ENCODE measurements at regions of chr10 and their contacts with region 1.

Region 1: GRCh38 chr10:6401562-6402348 is 178.3 kb downstream of the PRKCQ start:
- DNase-seq: peak; percentile 71
- ATAC-seq: peak; percentile 83
- H3K4me3 Mint-ChIP-seq: peak overlapping the region; percentile 1
- H3K27ac Mint-ChIP-seq: no peak overlapping the region
- H3K4me1 Mint-ChIP-seq: peaks cover 37% of the 10 kb centered on the region
- H3K27me3 Mint-ChIP-seq: peaks cover 4% of the 10 kb centered on the region
- CTCF ChIP-seq: peak; percentile 67

Region 2: DNA sequence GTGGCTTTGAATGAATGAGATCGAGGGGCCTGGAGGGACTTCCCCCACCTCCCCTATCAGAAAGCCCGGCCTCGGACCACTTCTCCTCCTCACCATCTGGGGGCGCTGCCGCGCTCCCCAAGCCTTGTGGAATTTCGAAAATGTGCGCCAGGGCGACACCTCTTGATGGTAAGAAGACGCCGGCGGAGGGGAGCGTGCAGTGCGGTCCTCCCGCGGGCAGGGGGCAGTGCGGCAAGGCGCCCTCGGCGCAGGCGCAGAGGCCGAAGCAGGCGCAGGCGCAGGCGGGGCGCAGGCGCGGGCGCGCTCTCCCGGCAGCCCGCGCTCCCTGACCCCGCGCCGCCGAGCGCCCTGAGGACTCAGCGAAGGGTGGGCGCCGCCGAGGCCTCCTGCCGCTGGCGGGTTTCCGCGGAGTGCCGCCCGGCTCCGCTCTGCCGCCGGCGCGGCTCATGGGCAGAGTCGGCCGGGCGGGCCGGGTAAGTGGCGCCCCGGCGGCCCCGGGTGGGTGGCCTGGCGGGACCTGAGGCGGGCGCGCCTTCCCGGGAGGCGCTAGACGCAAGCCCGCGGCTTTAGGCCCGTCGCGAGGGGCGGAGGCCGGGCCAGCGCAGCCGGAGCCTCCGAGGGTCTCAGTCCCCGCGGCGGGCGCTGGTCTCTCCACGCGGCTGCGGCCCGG is 312.9 kb before region 1 on chr10 and contains the start of gene RBM17:
- CTCF ChIA-PET with region 1: interaction called, 11 read pairs
- POLR2A ChIA-PET with region 1: no interaction called
- intact Hi-C with region 1: no loop called
- DNase-seq: peak; percentile 98
- ATAC-seq: peak; percentile 79
- H3K4me3 Mint-ChIP-seq: peak within 1 kb of the TSS; percentile 84
- H3K27ac Mint-ChIP-seq: peak within 1 kb of the TSS; percentile 81
- H3K4me1 Mint-ChIP-seq: peaks cover 60% of the 10 kb centered on the region
- H3K27me3 Mint-ChIP-seq: no peaks in the 10 kb centered on the region
- CTCF ChIP-seq: peak; percentile 100
- total RNA-seq, gene RBM17: 284 to 285 TPM

Region 3: GRCh38 chr10:6151087-6151977 is 250.4 kb before region 1 on chr10:
- CTCF ChIA-PET with region 1: interaction called, 13 read pairs
- POLR2A ChIA-PET with region 1: no interaction called
- intact Hi-C with region 1: no loop called
- DNase-seq: peak; percentile 70
- ATAC-seq: peak; percentile 78
- H3K4me3 Mint-ChIP-seq: peak overlapping the region; percentile 15
- H3K27ac Mint-ChIP-seq: peak overlapping the region; percentile 63
- H3K4me1 Mint-ChIP-seq: peaks cover 51% of the 10 kb centered on the region
- H3K27me3 Mint-ChIP-seq: no peaks in the 10 kb centered on the region
- CTCF ChIP-seq: peak; percentile 64

Region 4: GRCh38 chr10:6208799-6209235 is 192.9 kb before region 1 on chr10:
- CTCF ChIA-PET with region 1: interaction called, 19 read pairs
- POLR2A ChIA-PET with region 1: interaction called, 5 read pairs
- intact Hi-C with region 1: loop called (anchors 2 kb)
- DNase-seq: no peak
- ATAC-seq: no peak
- H3K4me3 Mint-ChIP-seq: no peak overlapping the region
- H3K27ac Mint-ChIP-seq: no peak overlapping the region
- H3K4me1 Mint-ChIP-seq: peaks cover 26% of the 10 kb centered on the region
- H3K27me3 Mint-ChIP-seq: no peaks in the 10 kb centered on the region
- CTCF ChIP-seq: no peak

Region 5: DNA sequence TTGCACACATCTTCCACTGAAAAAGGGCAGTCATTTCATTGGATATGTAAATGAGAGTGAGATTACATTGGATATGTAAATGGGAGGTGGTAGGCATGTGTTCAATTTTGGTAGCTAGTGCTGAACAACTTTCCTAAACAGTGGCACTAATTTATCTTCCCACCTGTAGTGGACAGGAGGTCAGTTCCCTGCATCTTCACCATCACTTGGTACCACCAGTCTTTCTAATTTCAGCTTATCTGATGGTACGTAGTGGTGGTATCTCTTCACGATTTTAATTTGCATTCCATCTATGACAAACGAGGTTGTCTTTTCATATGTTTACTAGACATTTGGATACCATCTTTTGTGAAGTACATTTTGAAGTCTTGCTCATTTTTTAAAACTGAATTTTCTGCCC is 140.9 kb before region 1 on chr10:
- CTCF ChIA-PET with region 1: interaction called, 13 read pairs
- POLR2A ChIA-PET with region 1: no interaction called
- intact Hi-C with region 1: no loop called
- DNase-seq: no peak
- ATAC-seq: no peak
- H3K4me3 Mint-ChIP-seq: no peak overlapping the region
- H3K27ac Mint-ChIP-seq: no peak overlapping the region
- H3K4me1 Mint-ChIP-seq: no peaks in the 10 kb centered on the region
- H3K27me3 Mint-ChIP-seq: no peaks in the 10 kb centered on the region
- CTCF ChIP-seq: no peak

Region 6: DNA sequence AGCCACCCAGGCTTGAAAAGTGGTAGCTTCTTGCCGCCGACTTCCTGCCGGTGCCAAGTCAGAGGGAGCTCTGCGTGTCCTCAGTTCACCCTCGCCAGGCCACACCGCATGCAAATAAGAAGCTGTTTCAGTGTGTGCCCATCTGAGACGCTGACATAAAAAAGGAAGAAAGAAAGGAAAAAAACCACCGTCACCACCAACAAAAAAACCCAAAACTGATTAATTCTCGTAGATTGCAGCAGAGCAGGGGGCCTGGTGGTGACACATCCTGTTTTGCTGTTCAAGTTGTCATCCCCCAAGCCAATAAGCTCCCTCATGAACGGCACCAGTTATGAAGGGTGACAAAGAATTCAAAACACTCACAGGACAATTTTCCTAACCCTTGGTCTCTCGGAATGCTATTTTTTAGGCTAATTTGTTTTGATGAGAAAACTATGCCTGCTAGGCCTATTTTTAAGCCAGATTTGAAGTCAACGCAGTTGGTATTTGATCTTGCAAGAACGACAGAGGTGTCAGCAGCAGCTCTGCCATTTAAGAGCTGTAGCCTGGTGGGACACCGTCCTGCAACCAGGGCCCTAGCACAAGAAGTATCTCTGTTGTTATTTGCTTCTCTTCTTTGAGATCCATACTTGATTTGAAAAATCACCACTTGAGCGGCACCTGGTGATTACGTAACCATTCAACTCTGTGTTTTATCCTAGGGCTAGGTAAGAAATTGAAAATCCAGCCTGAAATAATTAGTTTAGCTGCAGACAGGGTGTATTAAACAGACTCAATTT is 53.5 kb before region 1 on chr10:
- CTCF ChIA-PET with region 1: interaction called, 39 read pairs
- POLR2A ChIA-PET with region 1: interaction called, 18 read pairs
- intact Hi-C with region 1: no loop called
- DNase-seq: peak; percentile 93
- ATAC-seq: peak; percentile 90
- H3K4me3 Mint-ChIP-seq: peak overlapping the region; percentile 66
- H3K27ac Mint-ChIP-seq: peak overlapping the region; percentile 99
- H3K4me1 Mint-ChIP-seq: peaks cover 56% of the 10 kb centered on the region
- H3K27me3 Mint-ChIP-seq: no peaks in the 10 kb centered on the region
- CTCF ChIP-seq: no peak

Region 7: GRCh38 chr10:6416892-6417512 is 15.2 kb after region 1 on chr10:
- CTCF ChIA-PET with region 1: interaction called, 33 read pairs
- POLR2A ChIA-PET with region 1: no interaction called
- intact Hi-C with region 1: no loop called
- DNase-seq: no peak
- ATAC-seq: peak; percentile 82
- H3K4me3 Mint-ChIP-seq: no peak overlapping the region
- H3K27ac Mint-ChIP-seq: no peak overlapping the region
- H3K4me1 Mint-ChIP-seq: peaks cover 1% of the 10 kb centered on the region
- H3K27me3 Mint-ChIP-seq: no peaks in the 10 kb centered on the region
- CTCF ChIP-seq: peak; percentile 83

Region 8: DNA sequence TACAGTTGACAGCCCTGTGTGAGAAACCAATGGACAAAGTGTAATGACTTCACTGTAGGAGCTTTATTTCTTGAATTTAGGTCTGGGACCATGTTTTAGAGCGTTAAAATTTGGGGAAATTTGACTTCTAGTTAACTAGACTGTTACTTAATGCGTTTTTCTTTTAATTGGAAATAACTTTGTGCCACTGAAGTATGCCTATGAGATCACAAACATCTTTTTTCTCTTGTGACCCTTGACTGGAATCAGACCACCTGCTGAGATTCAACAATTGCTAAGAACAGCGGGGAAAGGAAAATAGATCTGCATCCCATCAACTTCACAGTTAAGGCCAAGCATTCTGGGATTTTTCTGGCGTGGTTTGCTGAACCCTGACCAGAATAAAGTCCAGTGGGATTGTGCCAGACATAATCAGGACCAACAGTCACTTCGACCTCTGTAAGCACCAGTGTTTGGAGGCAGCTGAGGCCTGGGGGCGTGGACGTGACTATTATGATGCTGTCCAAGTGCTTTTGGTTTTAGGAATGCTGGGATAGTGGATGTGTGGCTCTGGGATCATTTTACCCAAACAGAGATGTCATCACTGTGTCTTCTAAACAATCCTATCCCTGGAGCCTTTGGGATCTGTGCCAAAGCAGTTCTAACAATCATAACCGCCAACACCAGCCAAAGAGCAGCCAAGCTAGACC is 551.5 kb after region 1 on chr10:
- CTCF ChIA-PET with region 1: no interaction called
- POLR2A ChIA-PET with region 1: no interaction called
- intact Hi-C with region 1: no loop called
- DNase-seq: no peak
- ATAC-seq: no peak
- H3K4me3 Mint-ChIP-seq: no peak overlapping the region
- H3K27ac Mint-ChIP-seq: no peak overlapping the region
- H3K4me1 Mint-ChIP-seq: peaks cover 11% of the 10 kb centered on the region
- H3K27me3 Mint-ChIP-seq: no peaks in the 10 kb centered on the region
- CTCF ChIP-seq: no peak

Region 9: DNA sequence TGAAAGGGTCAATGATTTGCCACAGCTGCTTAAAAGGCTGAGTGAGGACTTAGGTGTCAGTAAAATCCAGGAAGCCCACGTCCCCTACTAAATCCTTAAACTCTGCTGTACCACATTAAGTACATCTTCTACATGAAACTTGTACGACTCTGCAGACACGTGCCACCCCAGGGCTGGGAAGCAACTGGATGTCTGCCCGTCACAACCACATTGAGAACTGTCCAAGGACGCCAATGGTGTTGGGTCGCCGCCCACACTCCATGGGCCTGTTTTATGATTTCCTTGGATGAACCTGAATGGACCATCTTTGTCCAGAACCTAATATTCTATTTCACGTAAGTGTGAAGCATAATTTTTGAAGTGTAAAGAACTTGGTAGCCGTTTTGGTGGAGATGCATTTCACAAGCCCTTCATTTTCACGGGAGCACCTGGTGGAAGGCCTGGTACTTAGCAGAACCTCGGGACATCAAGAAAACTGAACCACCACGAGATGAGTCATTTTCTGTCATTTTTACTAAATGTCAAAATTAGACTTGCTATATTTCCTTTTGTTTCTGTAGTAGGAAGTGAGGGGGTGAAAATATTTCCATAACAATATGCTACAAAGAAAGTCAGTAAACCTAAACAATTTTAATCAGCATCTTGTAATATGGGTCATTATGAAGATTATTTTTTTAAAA is 874.1 kb after region 1 on chr10:
- CTCF ChIA-PET with region 1: no interaction called
- POLR2A ChIA-PET with region 1: no interaction called
- intact Hi-C with region 1: no loop called
- DNase-seq: no peak
- ATAC-seq: peak; percentile 48
- H3K4me3 Mint-ChIP-seq: no peak overlapping the region
- H3K27ac Mint-ChIP-seq: peak overlapping the region; percentile 16
- H3K4me1 Mint-ChIP-seq: peaks cover 61% of the 10 kb centered on the region
- H3K27me3 Mint-ChIP-seq: no peaks in the 10 kb centered on the region
- CTCF ChIP-seq: no peak

Measured in activated CD8-positive, alpha-beta T cell treated with anti-CD3 and anti-CD28 coated beads for 36 hours (primary cell).